Dorsolateral prefrontal cortex (tissue), 120 donors: ENCODE measurements at regions of chr1 and their contacts with region 1.

Region 1: DNA sequence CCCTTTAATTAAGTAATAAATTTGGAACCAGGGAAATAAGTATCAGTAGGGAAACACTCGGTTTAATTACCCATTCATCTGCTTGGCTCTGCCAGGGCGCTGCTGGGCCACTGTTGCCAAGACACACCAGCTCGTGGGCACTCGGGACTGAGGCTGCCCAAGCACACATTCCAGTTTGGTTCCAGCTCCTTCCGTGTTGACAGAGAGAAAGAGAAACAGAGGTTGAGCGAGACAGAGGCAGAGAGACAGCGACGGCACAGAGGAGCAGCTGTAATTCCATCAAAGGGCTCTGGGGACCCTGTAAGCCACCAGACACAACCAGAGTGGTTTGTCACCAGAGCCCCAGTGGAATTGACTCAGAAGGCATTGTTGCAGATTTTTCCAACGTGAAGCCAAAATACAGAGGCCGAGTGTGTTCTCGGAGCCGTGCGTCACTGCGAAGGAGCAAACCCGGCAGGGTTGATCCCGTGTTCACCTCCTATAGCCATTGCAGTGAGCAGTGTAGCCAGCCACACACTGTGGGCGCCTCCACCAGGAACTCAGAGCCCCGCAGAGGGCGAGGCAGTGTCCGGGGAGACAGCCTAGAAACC is 33.5 kb downstream of the SYF2 start:
- DNase-seq: peak in 6 of 10 donors; percentile 43 to 69 (median 53)
- H3K4me3 ChIP-seq: peak overlapping the region in 51 of 59 donors; percentile 0 to 57 (median 33)
- H3K27ac ChIP-seq: peak overlapping the region in 43 of 59 donors; percentile 4 to 81 (median 53)
- H3K27me3 ChIP-seq: peaks cover 0 to 20% (median 0%) of the 10 kb centered on the region in 45 donors
- CTCF ChIP-seq: peak in 28 of 56 donors; percentile 11 to 47 (median 30)

Region 2: GRCh38 chr1:24930204-24931145 is 268.3 kb before region 1 on chr1 and contains the start of gene RUNX3:
- intact Hi-C with region 1: loop called (anchors 5 kb)
- DNase-seq: no peak
- H3K4me3 ChIP-seq: peak within 1 kb of the TSS in 56 of 59 donors; percentile 4 to 56 (median 34)
- H3K27ac ChIP-seq: peak within 1 kb of the TSS in 13 of 59 donors; percentile 5 to 69 (median 36)
- H3K27me3 ChIP-seq: peaks cover 8 to 98% (median 87%) of the 10 kb centered on the region in 45 donors
- CTCF ChIP-seq: peak in 5 of 56 donors; percentile 8 to 38 (median 24)
- total RNA-seq, gene RUNX3: 0.29 to 3.9 (median 0.96) TPM

Region 3: GRCh38 chr1:25167331-25168199 is 31.2 kb before region 1 on chr1:
- intact Hi-C with region 1: loop called in 1 of 2 experiments (anchors 1 kb)
- DNase-seq: peak in 3 of 10 donors; percentile 25 to 51 (median 50)
- H3K4me3 ChIP-seq: peak overlapping the region in 3 of 59 donors; percentile 2 to 14 (median 7)
- H3K27ac ChIP-seq: peak overlapping the region in 49 of 59 donors; percentile 1 to 84 (median 51)
- H3K27me3 ChIP-seq: no peaks in the 10 kb centered on the region
- CTCF ChIP-seq: peak in 3 of 56 donors; percentile 11 to 21 (median 12)